Breast epithelium (tissue), 4 donors: ENCODE measurements at regions of chrX and their contacts with region 1.

Region 1: GRCh38 chrX:154991039-154991438 is 31.5 kb downstream of the F8 start:
- DNase-seq: no peak
- H3K4me3 ChIP-seq: no peak overlapping the region
- H3K27ac ChIP-seq: no peak overlapping the region
- H3K4me1 ChIP-seq: no peaks in the 10 kb centered on the region
- H3K27me3 ChIP-seq: no peaks in the 10 kb centered on the region
- CTCF ChIP-seq: no peak
- POLR2A ChIP-seq: no peak

Region 2: DNA sequence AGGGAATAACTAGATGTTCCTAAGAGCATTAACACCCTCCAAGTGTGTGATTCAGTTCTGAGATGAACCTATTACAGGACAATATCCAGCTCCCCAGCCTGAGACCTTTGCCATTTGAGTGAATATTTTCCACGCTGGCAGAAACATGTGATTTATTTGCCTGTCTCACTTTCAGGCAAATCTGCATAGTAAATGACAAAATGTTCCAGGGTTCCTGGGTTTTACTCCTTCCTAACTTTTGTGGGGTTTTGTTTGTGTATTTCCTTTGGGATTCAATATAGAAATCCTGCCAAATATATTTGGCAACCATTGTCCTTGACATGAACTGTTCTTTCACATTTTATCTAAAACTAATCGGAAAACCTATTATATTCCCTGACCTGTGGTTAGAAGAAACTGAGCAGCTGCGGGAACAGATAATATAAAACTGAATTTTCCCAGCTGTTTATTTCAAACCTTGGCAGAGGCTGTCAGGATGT is 19.0 kb after region 1 on chrX:
- intact Hi-C with region 1: loop called (anchors 2 kb)
- DNase-seq: no peak
- H3K4me3 ChIP-seq: no peak overlapping the region
- H3K27ac ChIP-seq: no peak overlapping the region
- H3K4me1 ChIP-seq: no peaks in the 10 kb centered on the region
- H3K27me3 ChIP-seq: no peaks in the 10 kb centered on the region
- CTCF ChIP-seq: no peak
- POLR2A ChIP-seq: no peak

Region 3: DNA sequence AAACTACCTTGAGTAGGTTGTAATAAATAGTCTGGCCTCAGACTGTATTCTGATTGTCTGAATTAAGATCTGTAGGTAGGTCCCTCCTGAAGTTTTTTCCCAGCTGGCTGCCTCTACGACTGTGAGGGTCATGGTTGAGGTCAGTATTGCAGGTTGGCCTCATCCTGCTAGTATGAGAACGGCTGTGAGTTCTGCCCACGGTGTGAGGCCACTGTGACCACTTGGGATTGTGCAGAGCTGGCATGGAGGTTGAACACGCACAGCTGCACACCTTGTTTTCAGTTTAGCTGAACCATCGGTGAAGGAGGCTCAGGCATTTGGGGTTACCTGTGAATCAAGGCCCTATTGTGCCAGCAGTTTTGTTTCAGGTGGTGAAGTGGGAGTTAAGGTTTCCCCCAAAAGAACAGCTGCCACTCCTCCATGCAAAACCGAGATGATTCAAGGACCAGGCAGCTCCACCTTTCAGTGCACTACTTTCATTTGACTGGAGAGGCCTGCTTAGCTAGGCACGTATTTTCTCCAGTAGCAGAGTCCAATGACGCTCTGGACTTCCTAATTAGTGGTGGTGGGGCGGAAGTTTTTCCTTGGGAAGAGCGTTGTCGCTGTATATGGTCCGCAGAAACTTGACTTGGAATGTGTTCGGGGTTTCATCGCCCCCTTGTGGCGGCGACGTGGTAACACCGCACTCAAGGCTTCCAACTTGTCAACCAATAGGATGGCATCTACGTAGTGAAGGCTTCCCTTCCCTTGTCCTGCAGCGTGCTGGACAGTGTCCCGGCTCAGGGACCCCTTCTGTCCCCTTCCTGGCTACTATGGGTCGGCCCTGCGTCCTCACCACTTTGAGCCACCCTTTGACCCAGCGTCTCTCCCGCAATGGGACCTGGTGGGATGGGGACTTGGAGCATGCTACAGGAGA is 66.1 kb after region 1 on chrX:
- intact Hi-C with region 1: no loop called
- DNase-seq: peak; percentile 54 to 58
- H3K4me3 ChIP-seq: peak overlapping the region in 2 of 3 donors; percentile 23 to 34
- H3K27ac ChIP-seq: peak overlapping the region; percentile 21 to 25
- H3K4me1 ChIP-seq: no peaks in the 10 kb centered on the region
- H3K27me3 ChIP-seq: no peaks in the 10 kb centered on the region
- CTCF ChIP-seq: peak; percentile 64 to 76 (median 67)
- POLR2A ChIP-seq: no peak